ENCODE measurements at regions of chr12 and their contacts with region 1.

Region 1: GRCh38 chr12:123713398-123713797 is 1.2 kb downstream of the ATP6V0A2 start:
- DNase-seq: no peak
- ATAC-seq: no peak
- H3K4me3 ChIP-seq: peak overlapping the region; percentile 77 to 98 (median 96)
- H3K27ac ChIP-seq: no peak overlapping the region
- H3K4me1 ChIP-seq: peaks cover 27 to 28% of the 10 kb centered on the region in 2 donors
- H3K27me3 ChIP-seq: no peaks in the 10 kb centered on the region
- CTCF ChIP-seq: no peak
- POLR2A ChIP-seq: no peak

Region 2: DNA sequence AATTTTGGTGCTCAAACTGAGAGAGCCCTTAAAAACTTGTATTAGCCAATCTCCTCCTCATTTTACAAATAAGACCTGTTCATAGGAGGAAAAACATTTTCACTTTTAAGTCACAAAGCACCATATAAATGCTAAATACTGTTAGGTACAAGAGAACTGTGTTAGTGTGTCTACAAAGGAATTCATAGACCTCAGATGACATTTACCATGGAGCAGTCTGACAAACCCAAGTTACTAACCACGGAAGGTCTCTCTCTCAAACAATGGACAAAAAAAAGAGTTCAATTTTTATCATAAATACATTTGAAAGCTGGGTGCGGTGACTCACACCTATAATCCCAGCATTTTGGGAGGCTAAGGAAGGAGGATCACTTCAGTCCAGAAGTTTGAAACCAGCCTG is 358.8 kb before region 1 on chr12:
- in situ Hi-C with region 1: no loop called
- intact Hi-C with region 1: no loop called
- DNase-seq: no peak
- ATAC-seq: no peak
- H3K4me3 ChIP-seq: no peak overlapping the region
- H3K27ac ChIP-seq: no peak overlapping the region
- H3K4me1 ChIP-seq: peaks cover 4 to 15% of the 10 kb centered on the region in 2 donors
- H3K27me3 ChIP-seq: no peaks in the 10 kb centered on the region
- CTCF ChIP-seq: no peak
- POLR2A ChIP-seq: no peak

Region 3: DNA sequence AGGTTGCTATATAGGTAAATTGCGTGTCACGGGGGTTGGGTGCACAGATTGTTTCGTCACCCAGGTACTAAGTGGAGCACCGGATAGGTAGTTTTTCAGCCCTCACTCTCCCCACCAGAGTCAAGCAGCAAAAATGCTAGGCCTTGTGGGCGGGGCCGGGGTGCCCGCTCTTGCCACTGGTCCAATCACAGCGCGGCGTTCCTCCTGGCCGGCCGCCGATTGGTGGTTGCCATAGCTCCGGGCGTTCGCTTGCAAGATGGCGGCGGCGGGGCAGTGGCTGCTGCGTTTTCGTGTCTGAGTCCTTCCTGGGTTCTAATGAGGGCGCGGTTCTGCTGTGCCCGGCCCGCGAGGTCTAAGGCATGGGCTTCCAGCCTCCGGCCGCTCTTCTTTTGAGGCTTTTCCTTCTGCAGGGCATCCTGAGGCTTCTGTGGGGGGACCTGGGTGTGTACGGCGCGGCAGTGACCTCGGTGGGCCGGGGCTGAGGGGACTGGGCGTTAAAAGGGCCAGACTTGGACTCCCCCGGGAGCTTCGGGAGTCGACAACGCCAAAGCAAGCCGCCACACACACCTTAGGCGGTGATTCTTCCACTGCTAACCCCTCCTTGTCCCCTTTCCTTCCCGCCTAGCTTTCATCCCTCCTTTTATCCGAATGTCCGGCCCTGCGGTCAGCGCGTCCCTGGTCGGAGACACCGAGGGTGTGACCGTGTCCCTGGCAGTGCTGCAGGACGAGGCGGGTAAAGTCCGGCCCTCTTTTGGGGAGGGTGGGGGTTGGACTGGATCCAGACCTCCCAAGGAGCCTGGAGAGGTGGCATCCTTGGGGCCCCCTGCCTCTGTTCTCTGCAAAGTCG is 42.3 kb before region 1 on chr12 and contains the start of gene TCTN2:
- in situ Hi-C with region 1: no loop called
- intact Hi-C with region 1: loop called (anchors 2 kb)
- DNase-seq: peak; percentile 89 to 92
- ATAC-seq: peak; percentile 95 to 98
- H3K4me3 ChIP-seq: peak within 1 kb of the TSS; percentile 68 to 93 (median 86)
- H3K27ac ChIP-seq: peak within 1 kb of the TSS in 1 of 4 donors; percentile 20
- H3K4me1 ChIP-seq: peaks cover 8 to 9% of the 10 kb centered on the region in 2 donors
- H3K27me3 ChIP-seq: no peaks in the 10 kb centered on the region
- CTCF ChIP-seq: no peak
- POLR2A ChIP-seq: no peak
- total RNA-seq, gene TCTN2: 1.2 to 5.0 (median 1.6) TPM

Region 4: GRCh38 chr12:123972457-123973401 is 259.3 kb after region 1 on chr12 and contains the starts of genes CCDC92 and ZNF664:
- in situ Hi-C with region 1: no loop called
- intact Hi-C with region 1: loop called (anchors 2 kb)
- DNase-seq: peak; percentile 85 to 89
- ATAC-seq: peak; percentile 79 to 82
- H3K4me3 ChIP-seq: peak within 1 kb of the TSS; percentile 72 to 96 (median 94)
- H3K27ac ChIP-seq: peak within 1 kb of the TSS; percentile 91 to 92 (median 92)
- H3K4me1 ChIP-seq: peaks cover 10 to 13% of the 10 kb centered on the region in 2 donors
- H3K27me3 ChIP-seq: no peaks in the 10 kb centered on the region
- CTCF ChIP-seq: peak in 3 of 5 experiments; percentile 15 to 33 (median 22)
- POLR2A ChIP-seq: peak; percentile 65 to 77
- total RNA-seq, gene CCDC92: 21.1 to 29.1 (median 23.7) TPM
- total RNA-seq, gene ZNF664: 18.1 to 37.0 (median 32.6) TPM